ENCODE measurements at regions of chr16 and their contacts with region 1.

Region 1: DNA sequence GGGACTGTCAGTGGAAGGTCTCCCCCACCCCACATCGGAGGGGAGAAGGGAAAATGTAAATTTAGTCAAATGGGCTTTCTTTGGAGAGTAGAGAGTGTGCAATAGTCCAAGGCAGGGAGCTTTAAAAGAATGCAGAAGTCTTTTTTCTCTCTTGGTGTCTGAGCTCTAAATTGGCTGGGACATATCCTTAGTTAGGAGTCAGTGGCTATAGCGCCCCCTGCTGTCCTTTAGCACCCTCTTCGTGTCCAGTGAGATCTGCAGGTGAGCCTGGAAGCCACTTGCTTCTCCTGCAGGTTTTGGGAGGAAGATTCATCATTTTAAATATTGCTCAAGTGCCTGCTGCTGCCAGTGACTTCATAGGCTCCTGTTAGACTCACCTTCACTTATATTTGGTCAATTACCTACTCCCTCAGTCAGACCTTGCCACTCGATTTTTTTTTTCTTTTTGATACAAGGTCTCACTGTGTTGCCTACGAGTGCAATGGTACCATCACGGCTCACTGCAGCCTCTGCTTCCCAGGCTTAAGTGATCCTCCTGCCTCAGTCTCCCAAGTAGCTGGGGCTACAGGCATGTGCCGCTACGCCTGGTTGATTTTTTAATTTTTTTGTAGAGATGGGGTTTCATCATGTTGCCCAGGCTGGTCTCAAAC is 174.8 kb downstream of the PRKCB start:
- DNase-seq: peak; percentile 48 to 81
- ATAC-seq: peak; percentile 82 to 95
- H3K4me3 ChIP-seq: no peak overlapping the region
- H3K27ac ChIP-seq: no peak overlapping the region
- H3K4me1 ChIP-seq: no peaks in the 10 kb centered on the region
- CTCF ChIP-seq: peak; percentile 68
- EP300 ChIP-seq: no peak
- POLR2A ChIP-seq: no peak
- RAD21 ChIP-seq: peak; percentile 64 to 80; a peak in 4 of 5 replicates

Region 2: DNA sequence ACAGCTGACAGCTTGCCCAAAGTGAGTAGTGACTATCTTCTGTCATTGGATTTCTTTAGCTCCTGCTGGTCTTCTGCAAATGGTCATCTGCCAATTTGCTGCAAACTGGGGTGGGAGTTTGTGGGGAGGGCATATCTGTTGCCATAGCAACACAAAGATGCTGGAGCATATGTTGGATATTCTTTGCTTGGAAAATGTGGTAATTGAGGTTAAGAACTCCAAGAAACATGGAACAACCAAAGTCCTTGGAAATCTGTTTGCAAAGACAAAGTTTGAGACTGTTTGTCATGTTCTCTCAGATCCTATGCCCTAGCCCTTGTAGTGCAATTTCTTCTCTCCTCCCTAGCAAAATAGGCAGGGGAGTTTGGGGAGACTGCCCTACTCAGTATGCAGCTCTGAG is 19.5 kb before region 1 on chr16:
- CTCF ChIA-PET with region 1: interaction called, 12 read pairs
- POLR2A ChIA-PET with region 1: no interaction called
- DNase-seq: no peak
- ATAC-seq: no peak
- H3K4me3 ChIP-seq: no peak overlapping the region
- H3K27ac ChIP-seq: no peak overlapping the region
- H3K4me1 ChIP-seq: no peaks in the 10 kb centered on the region
- CTCF ChIP-seq: no peak
- EP300 ChIP-seq: no peak
- POLR2A ChIP-seq: no peak
- RAD21 ChIP-seq: no peak

Region 3: DNA sequence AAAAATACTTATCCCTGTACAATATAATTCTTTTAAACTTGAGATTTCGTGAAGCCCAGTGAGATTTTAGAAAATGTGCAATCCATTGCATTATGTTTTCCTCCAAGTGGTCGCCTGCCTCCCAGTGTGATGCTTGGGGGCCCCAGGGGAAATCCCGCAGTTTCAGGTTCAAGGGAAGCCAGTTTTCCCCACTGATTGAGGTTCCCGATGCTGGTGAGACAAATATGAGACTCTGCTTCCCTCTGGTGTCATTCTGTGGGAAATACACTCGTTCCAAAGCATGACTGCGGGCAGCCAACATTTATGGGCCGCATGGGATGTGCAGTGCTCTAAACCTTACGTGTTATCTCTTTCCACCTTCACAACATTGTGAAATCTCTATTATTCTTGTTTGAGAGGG is 26.0 kb after region 1 on chr16:
- CTCF ChIA-PET with region 1: interaction called, 23 read pairs
- POLR2A ChIA-PET with region 1: no interaction called
- DNase-seq: peak; percentile 48 to 84
- ATAC-seq: peak; percentile 78 to 91
- H3K4me3 ChIP-seq: no peak overlapping the region
- H3K27ac ChIP-seq: no peak overlapping the region
- H3K4me1 ChIP-seq: no peaks in the 10 kb centered on the region
- CTCF ChIP-seq: peak; percentile 80
- EP300 ChIP-seq: no peak
- POLR2A ChIP-seq: no peak
- RAD21 ChIP-seq: peak; percentile 89 to 93